PC-9 (cell line): ENCODE measurements at regions of chr12 and their contacts with region 1.

Region 1: GRCh38 chr12:76628745-76629144 is 69.2 kb upstream of the OSBPL8 start:
- DNase-seq: no peak
- H3K4me3 ChIP-seq: no peak overlapping the region
- H3K27ac ChIP-seq: no peak overlapping the region
- H3K4me1 ChIP-seq: peaks cover 12% of the 10 kb centered on the region; the same call in 1 of the 2 replicates
- H3K27me3 ChIP-seq: no peaks in the 10 kb centered on the region
- CTCF ChIP-seq: no peak

Region 2: DNA sequence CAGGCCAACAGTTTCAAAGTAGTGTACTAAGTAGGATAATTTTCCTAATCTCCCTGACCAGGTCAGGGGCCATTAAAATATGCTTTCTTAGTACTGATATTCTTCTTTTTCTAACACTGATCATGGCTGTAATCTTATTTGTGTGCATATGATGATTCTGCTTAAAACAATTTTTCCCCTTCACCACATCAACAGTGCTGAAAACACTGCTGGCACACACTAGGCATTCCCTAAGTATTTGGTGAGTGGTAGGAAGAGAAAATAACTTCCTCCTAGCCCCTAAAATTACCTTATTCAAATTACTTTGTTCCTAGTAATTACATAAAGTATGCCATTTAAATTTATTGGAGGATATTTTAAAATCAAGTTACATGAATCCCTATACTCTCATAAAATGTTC is 230.6 kb before region 1 on chr12:
- CTCF ChIA-PET with region 1: no interaction called
- POLR2A ChIA-PET with region 1: interaction called, 11 read pairs
- intact Hi-C with region 1: no loop called
- DNase-seq: no peak
- H3K4me3 ChIP-seq: no peak overlapping the region
- H3K27ac ChIP-seq: no peak overlapping the region
- H3K4me1 ChIP-seq: no peaks in the 10 kb centered on the region
- H3K27me3 ChIP-seq: no peaks in the 10 kb centered on the region
- CTCF ChIP-seq: no peak